PC-9 (cell line): ENCODE measurements at regions of chr13 and their contacts with region 1.

Region 1: DNA sequence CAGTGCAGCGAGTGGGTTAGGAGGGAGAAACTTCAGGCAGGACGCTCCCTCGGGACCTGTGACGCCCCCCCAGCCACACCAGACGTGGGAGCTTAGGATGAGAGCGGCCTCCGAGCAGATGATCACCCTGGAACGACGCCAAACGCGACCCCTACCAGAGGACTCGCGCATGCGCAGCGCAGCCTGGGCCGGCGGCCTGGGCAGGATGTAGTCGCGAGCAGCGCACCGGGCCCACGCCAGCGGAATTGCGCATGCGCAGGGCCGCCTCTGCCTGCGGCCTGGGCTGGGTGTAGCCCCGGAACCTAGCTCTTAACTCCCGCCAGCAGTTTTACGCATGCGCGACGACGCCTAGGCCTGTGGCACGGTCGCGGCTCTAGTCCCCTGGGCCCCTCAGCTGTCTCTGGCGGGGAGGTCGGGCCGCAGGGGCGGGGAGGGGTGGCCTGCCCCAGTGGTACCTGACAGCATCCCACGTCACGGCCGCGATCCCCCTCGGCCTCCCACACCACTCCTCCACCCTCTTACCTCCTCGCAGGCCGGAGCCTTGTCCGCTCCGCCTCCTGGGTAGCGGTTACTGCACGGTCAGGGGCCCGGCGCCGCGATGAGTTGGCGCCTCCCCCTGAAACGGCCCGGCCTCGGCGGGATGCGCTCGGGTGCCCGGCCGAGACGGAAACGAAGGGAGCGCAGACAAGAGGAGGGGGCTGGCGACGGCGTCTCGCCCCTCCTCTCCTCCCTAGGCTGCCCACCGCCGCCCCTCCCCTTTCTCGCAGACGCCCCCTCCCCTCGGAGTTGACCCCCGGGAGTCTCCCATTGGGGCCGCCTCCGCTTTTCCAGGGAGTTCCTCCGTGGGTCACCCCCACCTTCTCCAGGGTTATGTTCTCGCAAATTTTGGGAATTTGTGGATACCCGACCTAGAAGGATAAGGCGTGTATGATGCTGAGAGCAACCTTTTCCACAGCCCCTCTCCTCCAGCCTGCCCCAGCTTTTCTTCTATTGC is at the start of gene RCBTB2:
- DNase-seq: peak; percentile 79 to 97
- H3K4me3 ChIP-seq: peak within 1 kb of the TSS; percentile 94
- H3K27ac ChIP-seq: no peak within 1 kb of the TSS
- H3K4me1 ChIP-seq: 0 out of 2 replicates have a peak, but pooled peaks cover 8% of the 10 kb centered on the region
- H3K27me3 ChIP-seq: no peaks in the 10 kb centered on the region
- CTCF ChIP-seq: no peak
- total RNA-seq, gene RCBTB2: 1.7 and 2.6 TPM in 2 replicates

Region 2: DNA sequence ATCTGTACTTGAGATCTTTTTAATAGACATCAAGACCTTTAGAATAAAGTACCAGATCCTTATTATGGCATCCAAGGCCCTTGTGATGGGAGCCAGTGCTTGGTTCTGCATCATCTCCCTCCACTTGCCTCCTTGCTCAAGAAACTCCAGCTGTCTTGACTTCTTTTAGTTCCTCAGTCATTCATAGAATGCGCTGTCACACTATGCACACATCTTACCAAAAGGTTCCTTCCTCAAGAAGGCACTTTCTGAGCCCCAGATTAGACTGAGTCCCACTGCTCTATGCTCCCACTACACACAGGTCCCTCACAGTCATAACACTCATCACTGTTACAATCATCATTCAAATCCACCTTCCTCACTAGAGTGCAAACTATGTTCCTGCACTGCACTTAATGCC is 357.6 kb before region 1 on chr13:
- CTCF ChIA-PET with region 1: no interaction called
- POLR2A ChIA-PET with region 1: interaction called, 12 read pairs
- intact Hi-C with region 1: no loop called
- DNase-seq: no peak
- H3K4me3 ChIP-seq: no peak overlapping the region
- H3K27ac ChIP-seq: no peak overlapping the region
- H3K4me1 ChIP-seq: no peaks in the 10 kb centered on the region
- H3K27me3 ChIP-seq: no peaks in the 10 kb centered on the region
- CTCF ChIP-seq: no peak

Region 3: DNA sequence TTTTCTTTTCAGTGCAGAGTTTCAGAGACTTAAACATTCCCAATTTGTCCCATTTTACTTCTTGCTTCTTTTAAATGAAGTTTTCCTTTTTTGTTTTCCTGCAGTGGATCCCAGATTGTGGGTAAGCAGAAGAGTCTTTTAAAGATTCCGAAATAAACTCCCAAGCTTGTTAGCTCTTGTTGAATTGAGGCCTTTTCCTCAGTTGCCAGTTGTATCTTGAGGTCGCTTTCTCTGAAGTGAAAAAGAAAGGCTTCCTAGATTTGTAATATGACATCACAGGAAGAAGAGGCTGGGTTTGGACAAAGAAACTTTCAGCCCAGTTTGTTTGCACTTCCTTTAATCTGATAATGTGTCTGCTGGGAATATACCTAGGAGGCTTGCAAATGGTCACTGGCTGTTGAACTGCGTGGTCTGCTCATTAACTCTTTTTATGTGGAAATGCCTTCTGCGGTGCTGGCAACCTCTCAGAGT is 119.9 kb before region 1 on chr13 and contains the start of gene LPAR6:
- CTCF ChIA-PET with region 1: interaction called, 9 read pairs
- POLR2A ChIA-PET with region 1: interaction called, 6 read pairs
- intact Hi-C with region 1: loop called (anchors 5 kb)
- DNase-seq: no peak
- H3K4me3 ChIP-seq: no peak within 1 kb of the TSS
- H3K27ac ChIP-seq: no peak within 1 kb of the TSS
- H3K4me1 ChIP-seq: no peaks in the 10 kb centered on the region
- H3K27me3 ChIP-seq: no peaks in the 10 kb centered on the region
- CTCF ChIP-seq: no peak
- total RNA-seq, gene LPAR6: 2.7 TPM in 2 replicates

Region 4: DNA sequence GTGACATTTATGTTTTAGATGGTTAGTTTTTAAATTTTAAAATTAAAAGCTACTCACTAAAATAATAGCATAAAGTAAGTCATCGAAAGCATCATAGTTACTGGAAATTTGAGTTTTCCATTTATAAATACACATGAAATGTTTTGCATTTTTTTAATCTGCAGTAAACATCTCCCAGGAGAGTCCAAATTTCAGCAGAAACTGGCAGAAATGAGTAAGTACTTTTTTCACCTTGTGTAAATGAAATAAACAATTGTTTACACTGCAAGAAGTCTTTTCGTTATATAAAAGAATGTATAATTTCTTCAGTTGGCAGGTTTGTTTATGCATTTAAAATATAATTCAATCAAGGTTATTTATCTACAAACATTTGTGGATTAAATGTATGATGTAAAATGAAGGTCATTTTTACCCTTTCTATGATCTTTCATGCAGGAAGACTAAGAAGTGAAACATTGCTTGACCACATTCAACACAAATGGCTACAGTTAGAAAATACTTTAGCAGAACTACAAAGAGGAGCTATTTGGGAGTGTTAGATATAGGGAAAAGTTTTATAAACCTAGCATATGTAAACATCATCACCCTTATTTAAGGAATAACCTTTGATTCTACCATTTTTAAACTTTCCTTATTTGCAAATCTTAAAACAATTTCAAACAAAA is 55.5 kb before region 1 on chr13:
- CTCF ChIA-PET with region 1: no interaction called
- POLR2A ChIA-PET with region 1: no interaction called
- intact Hi-C with region 1: no loop called
- DNase-seq: no peak
- H3K4me3 ChIP-seq: no peak overlapping the region
- H3K27ac ChIP-seq: no peak overlapping the region
- H3K4me1 ChIP-seq: no peaks in the 10 kb centered on the region
- H3K27me3 ChIP-seq: no peaks in the 10 kb centered on the region
- CTCF ChIP-seq: no peak

Region 5: DNA sequence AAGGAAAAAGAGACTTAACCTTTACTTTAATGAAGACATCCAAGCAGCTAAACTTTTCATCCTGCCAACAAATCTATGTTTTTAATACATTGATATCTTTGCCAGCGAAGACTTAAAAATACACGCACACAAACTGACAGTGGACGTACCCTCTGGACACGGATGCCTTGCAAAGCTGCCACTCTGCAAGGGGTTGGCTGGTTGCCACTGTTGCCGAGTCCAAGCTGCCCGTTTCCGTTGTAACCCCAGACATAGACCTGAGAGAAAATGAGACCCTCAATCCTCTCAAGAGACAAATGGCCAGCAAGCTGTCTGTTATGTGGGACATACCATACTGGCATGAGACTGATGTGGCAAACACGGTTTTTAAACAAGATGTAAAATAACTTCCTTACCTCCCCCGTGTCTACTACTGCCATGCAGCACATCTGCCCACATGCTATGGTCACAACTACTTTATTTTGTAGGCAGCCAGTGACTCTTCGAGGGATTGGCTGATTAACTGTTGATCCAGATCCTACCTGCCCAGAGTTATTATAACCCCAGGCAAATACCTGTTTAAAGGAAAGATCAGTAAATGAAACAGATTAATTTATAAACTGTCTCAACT is 21.1 kb before region 1 on chr13:
- CTCF ChIA-PET with region 1: no interaction called
- POLR2A ChIA-PET with region 1: no interaction called
- intact Hi-C with region 1: no loop called
- DNase-seq: no peak
- H3K4me3 ChIP-seq: no peak overlapping the region
- H3K27ac ChIP-seq: no peak overlapping the region
- H3K4me1 ChIP-seq: no peaks in the 10 kb centered on the region
- H3K27me3 ChIP-seq: no peaks in the 10 kb centered on the region
- CTCF ChIP-seq: no peak

Region 6: DNA sequence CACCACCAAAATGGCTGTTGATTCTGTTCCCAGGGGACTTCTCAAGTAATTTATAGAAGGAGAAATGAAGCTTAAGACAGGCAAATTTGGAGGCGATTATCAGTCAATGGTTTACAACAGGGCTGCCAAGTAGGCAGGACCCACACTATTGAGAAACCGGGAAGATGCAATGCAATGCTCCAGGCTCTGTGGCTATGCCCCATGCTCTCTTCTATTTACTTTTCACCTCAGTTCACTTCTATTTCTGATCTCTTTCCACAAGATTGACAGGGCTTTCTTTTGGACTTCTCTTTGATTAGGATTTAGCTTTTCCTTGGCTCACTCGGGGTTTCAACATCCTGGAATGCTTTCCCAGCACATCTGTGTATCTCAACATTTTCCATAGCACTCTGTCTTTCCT is 12.8 kb after region 1 on chr13:
- CTCF ChIA-PET with region 1: no interaction called
- POLR2A ChIA-PET with region 1: no interaction called
- intact Hi-C with region 1: no loop called
- DNase-seq: no peak
- H3K4me3 ChIP-seq: no peak overlapping the region
- H3K27ac ChIP-seq: no peak overlapping the region
- H3K4me1 ChIP-seq: no peaks in the 10 kb centered on the region
- H3K27me3 ChIP-seq: no peaks in the 10 kb centered on the region
- CTCF ChIP-seq: no peak